Right ventricle myocardium inferior (tissue), 1 donor: ENCODE measurements at regions of chr6 and their contacts with region 1.

Region 1: GRCh38 chr6:16503970-16504415 is 257.3 kb downstream of the ATXN1 start:
- DNase-seq: no peak
- ATAC-seq: no peak

Region 2: GRCh38 chr6:16331329-16332174 is 172.4 kb before region 1 on chr6:
- intact Hi-C with region 1: no loop called
- DNase-seq: peak; percentile 89
- ATAC-seq: peak; percentile 69

Region 3: GRCh38 chr6:16471222-16471909 is 32.6 kb before region 1 on chr6:
- intact Hi-C with region 1: no loop called
- DNase-seq: no peak
- ATAC-seq: no peak

Region 4: DNA sequence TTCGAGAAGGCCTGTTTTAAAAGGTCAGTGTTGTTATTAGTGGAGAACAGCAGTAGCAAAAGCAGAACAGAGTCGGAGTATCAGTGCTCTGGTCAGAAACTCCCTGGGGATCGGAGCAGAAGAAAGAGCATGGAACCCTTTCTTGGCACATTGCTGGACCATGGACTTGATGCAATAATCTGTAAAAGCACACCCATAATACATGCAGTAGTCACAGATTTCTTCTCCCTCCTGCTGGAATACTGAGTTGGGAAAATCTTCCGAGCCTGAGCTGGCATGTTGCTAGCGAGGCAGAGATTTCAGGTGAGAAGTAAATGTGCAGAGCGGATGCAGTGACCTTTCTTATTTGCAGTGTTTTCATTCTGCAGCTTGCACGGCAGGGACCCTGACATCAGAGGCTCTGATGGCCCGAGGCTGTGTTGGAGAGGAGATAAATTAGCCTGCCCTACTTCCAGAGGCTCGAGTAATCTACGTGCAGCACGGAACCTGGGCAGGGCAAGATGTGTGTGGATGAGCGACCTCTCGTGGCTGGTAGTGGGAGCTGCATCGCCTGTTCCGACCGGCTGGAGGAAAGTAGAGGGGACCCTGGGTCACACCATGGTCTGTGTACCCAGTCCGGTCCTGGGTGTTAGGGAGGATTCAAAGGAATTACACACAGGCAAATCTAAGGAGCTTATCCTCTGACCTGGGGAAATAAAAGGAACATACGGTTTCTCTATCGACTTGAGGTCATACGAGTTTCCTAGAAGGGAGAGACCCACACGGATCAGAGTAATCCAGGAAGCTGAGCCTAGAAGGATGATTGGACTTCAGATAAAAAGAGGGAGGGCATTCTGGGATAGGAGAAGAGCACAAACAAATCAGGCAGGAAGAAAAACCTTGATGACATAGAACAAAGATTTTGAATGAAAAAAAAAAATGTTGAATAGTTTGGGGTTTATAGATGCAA is 460.8 kb after region 1 on chr6:
- intact Hi-C with region 1: loop called (anchors 10 kb)
- DNase-seq: peak; percentile 73
- ATAC-seq: peak; percentile 85